HCT116 (cell line): ENCODE measurements at regions of chr13 and their contacts with region 1.

Region 1: GRCh38 chr13:67224148-67224846 is 5.8 kb downstream of the PCDH9 start:
- DNase-seq: peak; percentile 59
- ATAC-seq: peak; percentile 86
- H3K4me3 ChIP-seq: no peak overlapping the region
- H3K27ac ChIP-seq: no peak overlapping the region
- H3K4me1 ChIP-seq: peaks cover 0 to 3% of the 10 kb centered on the region in 2 experiments; a peak in 1 of 4 replicates
- H3K27me3 ChIP-seq: no peaks in the 10 kb centered on the region
- CTCF ChIP-seq: peak; percentile 44 to 76 (median 59); a peak in 5 of 6 replicates
- POLR2A ChIP-seq: no peak
- RAD21 ChIP-seq: peak; percentile 83

Region 2: GRCh38 chr13:65656740-65657329 is 1567.5 kb before region 1 on chr13:
- CTCF ChIA-PET with region 1: interaction called, 3 read pairs
- POLR2A ChIA-PET with region 1: no interaction called
- RAD21 ChIA-PET with region 1: no interaction called
- intact Hi-C with region 1: loop called (anchors 5 kb)
- DNase-seq: no peak
- ATAC-seq: 0 out of 2 replicates have a peak, but pooled peaks have one; percentile 47
- H3K4me3 ChIP-seq: no peak overlapping the region
- H3K27ac ChIP-seq: no peak overlapping the region
- H3K4me1 ChIP-seq: no peaks in the 10 kb centered on the region
- H3K27me3 ChIP-seq: no peaks in the 10 kb centered on the region
- CTCF ChIP-seq: peak; percentile 25 to 66 (median 34); a peak in 4 of 6 replicates
- POLR2A ChIP-seq: no peak
- RAD21 ChIP-seq: peak; percentile 55

Region 3: DNA sequence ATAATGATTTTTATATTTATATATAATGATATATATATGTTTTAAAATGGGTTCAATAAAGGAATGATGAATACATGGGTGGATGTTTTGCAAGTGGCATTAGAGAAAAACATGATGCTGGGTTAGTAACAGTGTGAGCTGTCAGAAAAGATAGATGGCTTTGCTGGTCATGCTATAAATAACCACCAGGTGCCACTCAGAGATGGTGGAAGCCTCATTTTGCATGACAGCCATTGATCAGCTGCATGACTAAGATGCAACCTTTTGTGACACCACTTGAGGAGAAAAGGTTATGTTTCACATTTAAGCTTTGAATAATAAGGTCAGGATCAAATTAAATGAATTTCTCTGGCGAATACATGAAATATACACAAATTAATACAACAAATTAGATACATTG is 731.8 kb before region 1 on chr13:
- CTCF ChIA-PET with region 1: interaction called, 4 read pairs
- POLR2A ChIA-PET with region 1: no interaction called
- RAD21 ChIA-PET with region 1: no interaction called
- intact Hi-C with region 1: loop called (anchors 1 kb)
- DNase-seq: peak; percentile 10
- ATAC-seq: peak; percentile 84
- H3K4me3 ChIP-seq: no peak overlapping the region
- H3K27ac ChIP-seq: no peak overlapping the region
- H3K4me1 ChIP-seq: peaks cover 4% of the 10 kb centered on the region in 2 experiments; a peak in 2 of 4 replicates
- H3K27me3 ChIP-seq: no peaks in the 10 kb centered on the region
- CTCF ChIP-seq: peak in 2 of 3 experiments; percentile 45 to 49; a peak in 4 of 6 replicates
- POLR2A ChIP-seq: no peak
- RAD21 ChIP-seq: peak; percentile 49

Region 4: GRCh38 chr13:66618702-66619101 is 605.6 kb before region 1 on chr13:
- CTCF ChIA-PET with region 1: interaction called, 10 read pairs
- POLR2A ChIA-PET with region 1: no interaction called
- RAD21 ChIA-PET with region 1: no interaction called
- intact Hi-C with region 1: loop called (anchors 5 kb)
- DNase-seq: peak; percentile 26
- ATAC-seq: peak; percentile 85
- H3K4me3 ChIP-seq: no peak overlapping the region
- H3K27ac ChIP-seq: no peak overlapping the region
- H3K4me1 ChIP-seq: no peaks in the 10 kb centered on the region
- H3K27me3 ChIP-seq: no peaks in the 10 kb centered on the region
- CTCF ChIP-seq: peak in 1 of 3 experiments; percentile 20; a peak in 2 of 6 replicates
- POLR2A ChIP-seq: no peak
- RAD21 ChIP-seq: peak; percentile 34; the same call in 1 of the 2 replicates

Region 5: GRCh38 chr13:66689628-66690027 is 534.7 kb before region 1 on chr13:
- CTCF ChIA-PET with region 1: interaction called, 5 read pairs
- POLR2A ChIA-PET with region 1: no interaction called
- RAD21 ChIA-PET with region 1: interaction called in 1 of 2 experiments, 3 read pairs
- intact Hi-C with region 1: loop called (anchors 5 kb)
- DNase-seq: no peak
- ATAC-seq: no peak
- H3K4me3 ChIP-seq: no peak overlapping the region
- H3K27ac ChIP-seq: no peak overlapping the region
- H3K4me1 ChIP-seq: no peaks in the 10 kb centered on the region
- H3K27me3 ChIP-seq: no peaks in the 10 kb centered on the region
- CTCF ChIP-seq: no peak
- POLR2A ChIP-seq: no peak
- RAD21 ChIP-seq: peak; percentile 39; the same call in 1 of the 2 replicates

Region 6: GRCh38 chr13:67650471-67650870 is 426.2 kb after region 1 on chr13:
- CTCF ChIA-PET with region 1: no interaction called
- POLR2A ChIA-PET with region 1: no interaction called
- RAD21 ChIA-PET with region 1: no interaction called
- intact Hi-C with region 1: no loop called
- DNase-seq: no peak
- ATAC-seq: no peak
- H3K4me3 ChIP-seq: no peak overlapping the region
- H3K27ac ChIP-seq: no peak overlapping the region
- H3K4me1 ChIP-seq: no peaks in the 10 kb centered on the region
- H3K27me3 ChIP-seq: no peaks in the 10 kb centered on the region
- CTCF ChIP-seq: no peak
- POLR2A ChIP-seq: no peak
- RAD21 ChIP-seq: no peak